Prostate gland (tissue), 2 donors: ENCODE measurements at regions of chr19 and their contacts with region 1.

Region 1: GRCh38 chr19:36850559-36851442 is at the start of gene ZNF345:
- DNase-seq: peak; percentile 93
- H3K4me3 ChIP-seq: peak within 1 kb of the TSS; percentile 56 to 70
- H3K27ac ChIP-seq: peak within 1 kb of the TSS; percentile 87 to 90
- H3K4me1 ChIP-seq: no peaks in the 10 kb centered on the region
- H3K27me3 ChIP-seq: no peaks in the 10 kb centered on the region
- CTCF ChIP-seq: no peak
- POLR2A ChIP-seq: peak; percentile 36
- total RNA-seq, gene ZNF345: 4.1 to 12.6 TPM

Region 2: GRCh38 chr19:36627057-36627456 is 223.7 kb before region 1 on chr19:
- intact Hi-C with region 1: no loop called
- DNase-seq: no peak
- H3K4me3 ChIP-seq: no peak overlapping the region
- H3K27ac ChIP-seq: no peak overlapping the region
- H3K4me1 ChIP-seq: no peaks in the 10 kb centered on the region
- H3K27me3 ChIP-seq: no peaks in the 10 kb centered on the region
- CTCF ChIP-seq: no peak
- POLR2A ChIP-seq: no peak

Region 3: GRCh38 chr19:36665832-36666231 is 185.0 kb before region 1 on chr19:
- intact Hi-C with region 1: loop called (anchors 2 kb)
- DNase-seq: no peak
- H3K4me3 ChIP-seq: peak overlapping the region; percentile 66 to 74
- H3K27ac ChIP-seq: no peak overlapping the region
- H3K4me1 ChIP-seq: no peaks in the 10 kb centered on the region
- H3K27me3 ChIP-seq: no peaks in the 10 kb centered on the region
- CTCF ChIP-seq: no peak
- POLR2A ChIP-seq: no peak

Region 4: GRCh38 chr19:36771261-36772231 is 79.3 kb before region 1 on chr19:
- intact Hi-C with region 1: loop called (anchors 1 kb)
- DNase-seq: peak; percentile 34
- H3K4me3 ChIP-seq: peak overlapping the region; percentile 64 to 85
- H3K27ac ChIP-seq: peak overlapping the region; percentile 72 to 78
- H3K4me1 ChIP-seq: no peaks in the 10 kb centered on the region
- H3K27me3 ChIP-seq: no peaks in the 10 kb centered on the region
- CTCF ChIP-seq: no peak
- POLR2A ChIP-seq: no peak

Region 5: GRCh38 chr19:36915992-36916830 is 65.4 kb after region 1 on chr19 and contains the starts of genes ZNF568 and ZNF829:
- intact Hi-C with region 1: loop called (anchors 5 kb)
- DNase-seq: peak; percentile 88
- H3K4me3 ChIP-seq: peak within 1 kb of the TSS; percentile 74 to 84
- H3K27ac ChIP-seq: peak within 1 kb of the TSS; percentile 95
- H3K4me1 ChIP-seq: no peaks in the 10 kb centered on the region
- H3K27me3 ChIP-seq: no peaks in the 10 kb centered on the region
- CTCF ChIP-seq: peak in 3 of 4 experiments; percentile 41 to 62 (median 53)
- POLR2A ChIP-seq: peak; percentile 8
- total RNA-seq, gene ZNF568: 9.2 to 14.1 TPM
- total RNA-seq, gene ZNF829: 3.2 to 3.3 TPM